MCF 10A (cell line): ENCODE measurements at regions of chr5 and their contacts with region 1.

Region 1: DNA sequence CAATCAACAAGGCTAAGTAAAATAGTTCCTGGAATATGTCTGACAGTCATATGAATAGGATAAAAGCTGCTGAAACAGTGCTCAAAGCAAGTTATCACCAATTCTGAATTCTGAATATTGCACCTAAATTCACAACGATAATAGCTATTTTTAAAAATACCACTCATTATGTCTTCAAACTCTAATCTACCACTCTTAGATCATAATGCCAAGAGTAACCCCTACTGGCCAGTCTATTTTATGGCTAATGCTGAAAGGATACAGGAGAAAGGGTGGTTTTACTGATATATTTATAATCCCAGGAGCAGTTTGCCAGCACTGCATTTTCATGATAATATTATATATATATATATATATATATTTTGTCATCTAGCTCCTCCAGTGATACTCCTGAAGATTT is 232.8 kb downstream of the PDE4D start:
- DNase-seq: peak; percentile 36
- H3K4me3 Mint-ChIP-seq: no peak overlapping the region
- H3K27ac Mint-ChIP-seq: no peak overlapping the region
- H3K4me1 Mint-ChIP-seq: peaks cover 28% of the 10 kb centered on the region
- H3K27me3 Mint-ChIP-seq: no peaks in the 10 kb centered on the region
- CTCF ChIP-seq: peak; percentile 42

Region 2: GRCh38 chr5:59591162-59591561 is 69.6 kb before region 1 on chr5:
- CTCF ChIA-PET with region 1: no interaction called
- POLR2A ChIA-PET with region 1: interaction called, 13 read pairs
- intact Hi-C with region 1: no loop called
- DNase-seq: no peak
- H3K4me3 Mint-ChIP-seq: no peak overlapping the region
- H3K27ac Mint-ChIP-seq: peak overlapping the region; percentile 88
- H3K4me1 Mint-ChIP-seq: peaks cover 6% of the 10 kb centered on the region
- H3K27me3 Mint-ChIP-seq: no peaks in the 10 kb centered on the region
- CTCF ChIP-seq: no peak

Region 3: GRCh38 chr5:59799668-59800346 is 139.1 kb after region 1 on chr5:
- CTCF ChIA-PET with region 1: interaction called, 3 read pairs
- POLR2A ChIA-PET with region 1: no interaction called
- intact Hi-C with region 1: loop called (anchors 1 kb)
- DNase-seq: peak; percentile 77
- H3K4me3 Mint-ChIP-seq: no peak overlapping the region
- H3K27ac Mint-ChIP-seq: no peak overlapping the region
- H3K4me1 Mint-ChIP-seq: no peaks in the 10 kb centered on the region
- H3K27me3 Mint-ChIP-seq: no peaks in the 10 kb centered on the region
- CTCF ChIP-seq: peak; percentile 67